Activated CD4-positive, alpha-beta memory T cell treated with anti-CD3 and anti-CD28 coated beads for 36 hours (primary cell): ENCODE measurements at regions of chr7 and their contacts with region 1.

Region 1: GRCh38 chr7:1065263-1066260 is 21.2 kb downstream of the GPR146 start:
- DNase-seq: peak; percentile 89
- H3K4me3 Mint-ChIP-seq: no peak overlapping the region
- H3K27ac Mint-ChIP-seq: no peak overlapping the region
- H3K4me1 Mint-ChIP-seq: peaks cover 5% of the 10 kb centered on the region
- H3K27me3 Mint-ChIP-seq: no peaks in the 10 kb centered on the region

Region 2: DNA sequence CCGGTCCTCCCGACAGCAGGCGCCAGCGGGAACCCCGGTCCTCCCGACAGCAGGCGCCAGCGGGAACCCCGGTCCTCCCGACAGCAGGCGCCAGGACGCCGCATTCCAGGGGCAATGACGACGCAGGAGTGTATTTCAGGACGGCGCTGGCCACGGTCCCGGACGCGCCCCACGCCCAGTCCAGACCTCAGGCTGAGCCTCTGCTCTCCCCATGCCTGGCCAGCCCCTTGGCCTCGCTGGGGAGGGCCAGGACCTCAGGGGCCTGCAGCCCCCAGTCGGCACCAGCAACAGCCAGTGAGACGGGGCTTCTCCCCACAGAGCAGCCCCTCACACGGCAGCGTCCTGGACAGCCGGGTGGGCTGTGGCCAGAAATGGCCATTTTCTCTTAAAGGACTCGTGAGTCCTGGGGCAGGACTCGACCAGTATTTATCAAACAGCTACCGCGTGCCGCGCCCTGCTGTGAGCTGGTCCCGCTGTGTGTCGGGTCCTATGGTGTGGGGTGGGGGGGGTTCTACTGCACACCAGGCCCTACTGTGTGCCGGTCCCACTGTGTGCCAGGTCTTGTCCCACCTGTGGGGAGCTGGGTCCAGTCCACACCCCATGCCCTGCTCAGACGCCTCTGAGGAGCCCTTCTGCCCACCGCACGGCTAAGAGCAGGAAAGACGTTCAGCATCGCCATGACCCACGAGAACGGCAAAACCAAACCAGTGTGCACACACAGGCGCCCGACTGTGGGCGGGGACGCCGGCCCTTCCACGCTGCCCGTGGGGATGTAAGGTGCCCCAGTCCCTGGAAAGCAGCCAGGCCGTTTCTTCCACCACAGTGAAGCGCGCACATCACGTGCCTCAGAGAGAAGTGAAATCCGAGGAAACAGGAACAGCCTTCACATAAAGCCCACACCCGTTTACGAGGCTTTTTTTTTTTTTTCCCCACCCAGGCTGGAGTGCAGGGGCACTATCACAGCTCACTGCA is 155.9 kb before region 1 on chr7:
- CTCF ChIA-PET with region 1: interaction called, 17 read pairs
- POLR2A ChIA-PET with region 1: no interaction called
- intact Hi-C with region 1: no loop called
- DNase-seq: no peak
- H3K4me3 Mint-ChIP-seq: peak overlapping the region; percentile 8
- H3K27ac Mint-ChIP-seq: no peak overlapping the region
- H3K4me1 Mint-ChIP-seq: peaks cover 10% of the 10 kb centered on the region
- H3K27me3 Mint-ChIP-seq: no peaks in the 10 kb centered on the region

Region 3: DNA sequence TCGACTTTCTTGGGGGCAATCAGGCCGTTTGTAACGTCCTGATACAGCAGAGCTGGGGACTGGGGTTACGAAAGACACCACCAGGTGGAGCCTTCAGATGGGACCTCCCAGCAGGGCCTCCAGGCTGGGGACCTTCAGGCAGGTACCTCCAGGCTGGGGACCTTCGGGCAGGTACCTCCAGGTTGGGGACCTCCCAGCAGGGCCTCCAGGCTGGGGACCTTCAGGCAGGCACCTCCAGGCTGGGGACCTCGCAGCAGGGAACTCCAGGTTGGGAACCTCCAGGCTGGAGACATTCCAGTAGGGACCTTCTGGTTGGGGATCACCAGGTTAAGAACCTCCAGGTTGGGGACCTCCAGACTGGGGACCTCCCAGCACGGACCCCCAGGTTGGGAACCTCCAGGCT is 44.7 kb before region 1 on chr7:
- CTCF ChIA-PET with region 1: interaction called, 14 read pairs
- POLR2A ChIA-PET with region 1: no interaction called
- intact Hi-C with region 1: no loop called
- DNase-seq: no peak
- H3K4me3 Mint-ChIP-seq: no peak overlapping the region
- H3K27ac Mint-ChIP-seq: no peak overlapping the region
- H3K4me1 Mint-ChIP-seq: peaks cover 8% of the 10 kb centered on the region
- H3K27me3 Mint-ChIP-seq: no peaks in the 10 kb centered on the region

Region 4: DNA sequence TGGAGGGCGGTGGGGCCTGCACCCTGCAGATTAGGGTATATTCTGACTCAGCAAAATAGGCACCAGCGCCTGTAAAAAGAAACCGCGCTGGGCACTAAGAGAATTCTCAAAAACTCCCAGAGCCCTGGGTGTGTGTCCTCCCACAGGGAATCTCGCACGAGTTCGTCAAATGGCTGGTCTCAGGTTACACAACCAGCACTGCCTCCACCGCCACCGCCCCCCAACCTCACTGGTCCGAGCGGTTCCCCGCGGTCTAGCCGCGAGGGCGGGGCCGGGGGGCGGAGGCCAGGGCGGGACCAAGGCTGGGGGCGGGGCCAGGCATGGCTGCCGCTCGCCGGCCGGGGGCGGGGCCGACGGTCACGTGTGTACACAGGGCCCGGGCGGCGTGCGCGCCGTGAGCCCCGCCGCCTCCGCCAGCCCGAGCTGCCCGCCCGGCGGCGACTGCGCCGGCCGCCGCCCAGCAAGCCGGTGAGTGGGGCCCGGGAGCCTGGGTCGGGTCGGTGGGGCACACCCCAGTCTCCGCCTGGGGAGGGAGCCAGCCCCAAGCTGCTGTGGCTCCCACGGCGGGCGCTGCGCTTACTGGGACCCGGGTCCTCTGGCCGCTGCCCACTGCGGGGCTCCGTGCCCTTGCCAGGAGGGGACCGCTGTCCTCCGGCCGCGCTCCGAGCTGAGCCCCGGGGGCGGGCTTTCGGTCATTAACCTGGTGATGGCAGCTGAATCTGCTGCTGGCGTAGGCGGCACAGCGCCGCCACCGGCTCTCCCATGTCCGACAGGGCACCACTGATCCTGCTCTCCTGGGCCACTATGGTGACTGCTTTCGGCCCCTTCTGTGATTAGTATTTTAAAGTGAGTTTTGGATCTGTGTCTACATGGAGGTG is 21.1 kb before region 1 on chr7 and contains the start of gene GPR146:
- CTCF ChIA-PET with region 1: interaction called, 32 read pairs
- POLR2A ChIA-PET with region 1: interaction called, 4 read pairs
- intact Hi-C with region 1: no loop called
- DNase-seq: peak; percentile 95
- H3K4me3 Mint-ChIP-seq: peak within 1 kb of the TSS; percentile 76
- H3K27ac Mint-ChIP-seq: peak within 1 kb of the TSS; percentile 76
- H3K4me1 Mint-ChIP-seq: peaks cover 60% of the 10 kb centered on the region
- H3K27me3 Mint-ChIP-seq: no peaks in the 10 kb centered on the region
- total RNA-seq, gene GPR146: 1.6 to 2.1 TPM

Region 5: GRCh38 chr7:1086588-1087464 is 21.3 kb after region 1 on chr7:
- CTCF ChIA-PET with region 1: interaction called, 15 read pairs
- POLR2A ChIA-PET with region 1: no interaction called
- intact Hi-C with region 1: no loop called
- DNase-seq: peak; percentile 81
- H3K4me3 Mint-ChIP-seq: peak overlapping the region; percentile 54
- H3K27ac Mint-ChIP-seq: no peak overlapping the region
- H3K4me1 Mint-ChIP-seq: peaks cover 14% of the 10 kb centered on the region
- H3K27me3 Mint-ChIP-seq: no peaks in the 10 kb centered on the region

Region 6: DNA sequence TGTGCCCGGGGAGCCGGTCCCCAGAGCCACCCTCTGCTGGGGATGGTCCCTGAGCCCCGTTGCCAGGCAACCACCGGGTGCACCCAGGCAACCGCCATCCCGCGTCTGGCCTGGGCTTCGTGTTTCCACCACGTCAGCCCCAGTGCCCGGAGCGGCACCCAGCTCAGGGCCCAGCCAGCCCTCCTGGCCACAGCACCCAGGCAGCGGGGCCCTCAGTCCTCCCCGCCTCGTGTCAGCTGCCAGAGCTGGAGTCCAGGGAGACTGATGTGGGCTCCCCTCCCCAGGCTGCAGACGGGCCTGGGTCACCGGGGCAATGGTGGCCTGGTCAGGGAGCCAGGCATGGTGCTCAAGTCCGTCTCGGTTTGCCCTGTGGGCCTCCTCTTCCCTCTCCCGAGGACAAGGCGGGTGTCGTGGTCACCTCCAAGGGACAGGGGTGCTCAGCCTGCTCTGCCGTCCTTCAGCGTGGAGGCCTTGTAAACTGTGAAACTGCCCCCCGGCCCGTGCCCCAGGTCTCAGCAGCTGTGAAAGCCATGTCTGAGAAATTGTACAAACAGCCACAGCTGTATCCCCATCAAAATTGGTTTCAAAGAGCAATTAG is 321.2 kb after region 1 on chr7:
- CTCF ChIA-PET with region 1: no interaction called
- POLR2A ChIA-PET with region 1: no interaction called
- intact Hi-C with region 1: no loop called
- DNase-seq: no peak
- H3K4me3 Mint-ChIP-seq: no peak overlapping the region
- H3K27ac Mint-ChIP-seq: no peak overlapping the region
- H3K4me1 Mint-ChIP-seq: no peaks in the 10 kb centered on the region
- H3K27me3 Mint-ChIP-seq: peaks cover 17% of the 10 kb centered on the region